ENCODE measurements at regions of chr2 and their contacts with region 1.

Region 1: DNA sequence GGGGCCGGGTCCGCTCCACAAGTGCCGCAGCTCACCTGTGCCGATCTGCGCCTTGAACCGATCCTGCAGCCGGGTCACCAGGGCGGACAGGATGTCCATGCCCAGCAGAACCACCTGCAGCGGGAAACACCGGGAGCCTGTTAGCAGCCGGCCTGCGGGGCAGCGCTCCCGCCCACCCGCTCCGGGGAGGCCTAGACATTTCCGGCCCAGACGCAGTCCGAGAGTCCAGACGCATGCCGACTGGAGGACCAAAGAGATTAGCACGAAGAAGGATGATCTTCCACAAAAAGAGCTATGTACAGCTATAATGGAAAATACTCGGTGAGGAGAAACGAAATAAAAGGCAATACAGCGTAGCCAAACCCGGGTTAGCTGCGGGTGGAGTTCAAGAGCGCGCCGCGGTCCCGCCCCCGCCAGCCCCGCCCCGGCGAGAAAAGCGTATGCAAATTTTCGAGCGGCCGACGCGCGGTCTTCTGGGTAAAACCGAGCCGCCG is 421 bp upstream of the RNU4ATAC start:
- DNase-seq: peak; percentile 61
- ATAC-seq: peak; percentile 66
- H3K4me3 Mint-ChIP-seq: peak overlapping the region; percentile 93
- H3K27ac Mint-ChIP-seq: peak overlapping the region; percentile 99
- H3K4me1 Mint-ChIP-seq: peaks cover 31% of the 10 kb centered on the region
- H3K27me3 Mint-ChIP-seq: no peaks in the 10 kb centered on the region
- CTCF ChIP-seq: no peak

Region 2: GRCh38 chr2:121519732-121520640 is 10.3 kb before region 1 on chr2:
- CTCF ChIA-PET with region 1: no interaction called
- POLR2A ChIA-PET with region 1: interaction called, 19 read pairs
- intact Hi-C with region 1: no loop called
- DNase-seq: no peak
- ATAC-seq: no peak
- H3K4me3 Mint-ChIP-seq: no peak overlapping the region
- H3K27ac Mint-ChIP-seq: no peak overlapping the region
- H3K4me1 Mint-ChIP-seq: no peaks in the 10 kb centered on the region
- H3K27me3 Mint-ChIP-seq: no peaks in the 10 kb centered on the region
- CTCF ChIP-seq: no peak

Region 3: DNA sequence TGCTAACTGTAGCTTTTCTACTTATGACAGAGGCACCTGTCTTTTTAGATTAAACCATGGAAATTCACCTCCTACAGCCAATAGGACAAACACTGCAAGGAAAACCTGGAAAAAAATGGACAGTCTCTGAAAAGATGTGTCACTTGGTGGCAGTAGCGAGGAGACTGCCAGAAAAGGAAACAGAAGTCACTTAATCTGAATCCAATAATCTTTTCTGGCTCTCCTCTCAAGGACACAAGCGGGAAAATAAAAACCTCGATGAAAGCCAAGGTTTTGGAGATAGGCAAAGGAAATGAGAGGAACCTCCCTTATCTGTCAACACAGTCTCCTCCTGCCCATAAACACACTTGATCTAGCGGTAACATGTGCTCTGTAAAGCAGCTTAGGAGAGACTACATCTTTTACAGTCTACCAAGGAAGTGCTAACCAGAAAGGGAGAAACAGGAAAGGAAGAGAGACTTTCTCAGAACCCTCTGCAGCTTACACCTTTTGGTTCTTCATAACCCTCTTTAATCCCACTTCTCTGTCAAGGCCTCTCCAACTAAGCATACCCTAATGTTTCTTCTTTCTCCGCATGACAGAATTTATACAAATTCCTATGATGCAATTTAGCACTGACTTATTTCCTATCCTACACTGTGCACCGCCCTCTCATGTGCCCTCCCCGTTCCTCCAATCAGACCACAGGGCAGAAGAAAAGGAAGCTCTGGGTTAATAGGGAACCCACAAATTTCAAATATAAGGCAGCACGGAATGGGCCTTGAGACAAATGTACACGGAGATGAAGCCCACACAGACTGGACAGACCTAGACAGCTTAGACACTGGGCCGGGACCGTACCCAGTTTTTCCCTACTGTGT is 66.2 kb after region 1 on chr2:
- CTCF ChIA-PET with region 1: no interaction called
- POLR2A ChIA-PET with region 1: interaction called, 31 read pairs
- intact Hi-C with region 1: loop called (anchors 1 kb)
- DNase-seq: no peak
- ATAC-seq: peak; percentile 94
- H3K4me3 Mint-ChIP-seq: peak overlapping the region; percentile 74
- H3K27ac Mint-ChIP-seq: peak overlapping the region; percentile 87
- H3K4me1 Mint-ChIP-seq: peaks cover 48% of the 10 kb centered on the region
- H3K27me3 Mint-ChIP-seq: no peaks in the 10 kb centered on the region
- CTCF ChIP-seq: no peak

Region 4: DNA sequence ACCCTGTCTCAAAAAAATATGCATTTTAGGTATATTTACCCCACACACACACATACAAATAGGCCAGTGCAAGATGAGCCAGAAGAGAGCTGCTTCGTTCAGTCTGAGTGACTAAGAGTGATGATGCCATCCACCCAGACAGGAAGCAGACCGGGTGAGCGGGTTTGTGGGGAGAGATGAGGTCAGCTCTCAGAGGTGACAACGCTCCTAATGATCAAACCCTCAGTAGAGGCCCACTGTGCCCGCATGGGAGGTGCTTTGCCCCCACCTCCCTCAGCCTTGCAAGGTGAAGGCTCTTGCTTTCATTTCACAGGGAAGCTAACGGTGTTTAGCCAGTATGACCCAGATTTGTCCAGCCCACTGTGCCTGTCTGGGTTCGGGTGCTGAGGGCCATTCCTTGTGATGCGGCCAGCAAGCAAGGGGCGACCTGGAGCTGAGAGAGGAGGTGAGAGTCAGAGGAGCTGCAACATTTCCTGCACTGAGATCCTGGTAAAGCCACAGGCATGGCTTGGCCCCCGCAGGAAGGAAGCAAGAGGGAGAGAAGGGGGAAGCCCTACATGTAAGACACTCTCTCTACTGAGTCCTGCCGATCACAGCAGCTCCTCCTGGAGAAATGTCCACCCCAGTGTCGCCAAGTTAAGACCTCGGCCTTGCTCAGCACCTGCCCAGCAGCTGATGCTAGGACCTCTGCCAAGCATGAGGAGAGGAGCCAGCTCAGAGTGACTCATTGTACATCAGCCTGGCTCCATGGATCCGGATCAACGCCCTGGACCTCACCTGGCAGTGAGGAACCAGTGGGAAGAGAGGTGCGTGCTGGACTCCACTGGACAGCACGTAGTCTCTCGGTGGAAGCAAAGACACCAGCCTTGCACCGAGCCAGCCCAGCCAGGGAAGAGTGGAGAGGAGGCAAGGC is 169.4 kb after region 1 on chr2:
- CTCF ChIA-PET with region 1: no interaction called
- POLR2A ChIA-PET with region 1: interaction called, 16 read pairs
- intact Hi-C with region 1: no loop called
- DNase-seq: peak; percentile 18
- ATAC-seq: peak; percentile 99
- H3K4me3 Mint-ChIP-seq: peak overlapping the region; percentile 57
- H3K27ac Mint-ChIP-seq: no peak overlapping the region
- H3K4me1 Mint-ChIP-seq: peaks cover 12% of the 10 kb centered on the region
- H3K27me3 Mint-ChIP-seq: no peaks in the 10 kb centered on the region
- CTCF ChIP-seq: no peak

Region 5: DNA sequence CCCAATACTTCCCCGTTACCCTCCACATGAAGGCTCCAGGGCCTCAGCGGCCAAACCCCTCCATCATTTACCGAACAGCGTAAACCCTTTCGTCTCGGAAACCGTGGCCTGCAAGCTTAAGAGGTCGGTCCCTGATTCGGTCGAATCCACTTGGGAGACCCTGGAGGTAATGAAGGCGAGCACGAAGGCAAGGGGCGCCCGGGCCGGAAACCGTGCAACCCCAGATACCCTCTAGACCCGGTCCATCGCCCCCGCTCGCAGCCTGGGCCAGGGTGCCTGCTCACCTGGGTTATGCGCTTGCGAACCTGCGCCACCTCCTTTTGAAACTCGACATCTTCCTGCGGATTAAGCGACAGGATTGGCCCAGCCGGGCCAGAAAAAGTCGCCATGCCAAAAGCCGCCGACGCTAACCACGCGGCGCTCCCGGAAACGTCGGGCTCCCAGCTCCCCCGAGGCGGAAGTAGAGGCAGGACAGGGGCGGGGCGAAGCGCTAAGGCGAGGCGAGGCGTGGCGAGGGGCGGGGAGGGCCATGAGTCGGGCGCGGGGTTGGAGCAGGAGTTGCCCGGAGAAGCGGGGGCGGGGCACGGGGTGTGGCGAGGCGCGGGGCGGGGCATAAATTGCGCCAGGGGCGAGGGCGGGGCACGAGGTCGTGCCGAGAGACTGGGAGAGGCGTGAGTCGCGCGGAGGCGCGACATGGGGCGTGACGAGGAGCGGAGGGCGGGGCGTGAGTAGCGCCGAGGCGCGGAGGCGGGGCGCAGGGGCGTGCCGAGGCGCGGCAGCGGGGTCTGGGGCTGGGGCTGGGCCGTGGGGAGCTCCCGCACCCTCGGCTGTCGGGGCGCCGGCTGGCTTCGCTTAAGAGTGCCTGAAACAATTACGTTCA is 206.4 kb after region 1 on chr2 and contains the start of gene NIFK:
- CTCF ChIA-PET with region 1: interaction called, 3 read pairs
- POLR2A ChIA-PET with region 1: interaction called, 95 read pairs
- intact Hi-C with region 1: loop called (anchors 1 kb)
- DNase-seq: peak; percentile 99
- ATAC-seq: peak; percentile 93
- H3K4me3 Mint-ChIP-seq: peak within 1 kb of the TSS; percentile 97
- H3K27ac Mint-ChIP-seq: peak within 1 kb of the TSS; percentile 97
- H3K4me1 Mint-ChIP-seq: peaks cover 20% of the 10 kb centered on the region
- H3K27me3 Mint-ChIP-seq: no peaks in the 10 kb centered on the region
- CTCF ChIP-seq: no peak
- total RNA-seq, gene NIFK: 86.4 and 102 TPM in 2 replicates

Region 6: DNA sequence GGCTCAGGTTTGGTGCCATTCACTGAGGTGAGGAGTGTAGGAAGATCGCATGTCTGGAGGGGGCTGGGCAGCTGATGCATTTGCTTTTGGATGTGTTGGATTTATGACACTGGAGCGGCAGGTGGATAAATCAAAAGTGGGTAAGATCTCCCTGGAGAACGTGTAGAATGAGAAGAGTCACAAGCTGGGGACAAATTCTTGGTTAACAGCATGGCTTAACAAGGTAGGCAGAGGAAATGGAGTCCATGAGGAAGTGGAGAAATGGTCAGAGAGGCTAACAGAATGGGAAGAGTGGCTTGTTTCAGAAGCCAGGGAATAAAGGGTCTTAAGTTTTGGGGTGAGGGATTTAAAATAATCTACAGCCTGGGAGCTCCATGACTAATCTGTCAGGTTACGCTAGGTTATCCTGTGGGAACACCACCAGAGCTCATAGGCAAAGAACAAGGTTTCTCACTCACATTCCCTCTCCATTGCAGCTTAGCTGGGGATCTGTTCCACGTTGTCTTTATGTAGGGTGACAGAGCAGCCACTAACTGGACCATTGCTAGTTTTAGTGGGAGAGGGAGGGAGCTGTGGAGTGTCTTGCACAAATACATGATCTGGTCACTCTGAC is 238.0 kb after region 1 on chr2:
- CTCF ChIA-PET with region 1: no interaction called
- POLR2A ChIA-PET with region 1: interaction called, 11 read pairs
- intact Hi-C with region 1: no loop called
- DNase-seq: no peak
- ATAC-seq: no peak
- H3K4me3 Mint-ChIP-seq: no peak overlapping the region
- H3K27ac Mint-ChIP-seq: no peak overlapping the region
- H3K4me1 Mint-ChIP-seq: no peaks in the 10 kb centered on the region
- H3K27me3 Mint-ChIP-seq: no peaks in the 10 kb centered on the region
- CTCF ChIP-seq: no peak